Transverse colon (tissue), 4 donors: ENCODE measurements at regions of chr2 and their contacts with region 1.

Region 1: GRCh38 chr2:174682578-174683391 is 81.5 kb downstream of the CHRNA1 start:
- DNase-seq: peak; percentile 75
- H3K4me3 ChIP-seq: peak overlapping the region; percentile 72 to 89 (median 81)
- H3K27ac ChIP-seq: peak overlapping the region; percentile 84 to 88 (median 86)
- H3K4me1 ChIP-seq: peaks cover 3 to 17% (median 13%) of the 10 kb centered on the region in 4 donors
- H3K27me3 ChIP-seq: peaks cover 12% of the 10 kb centered on the region
- CTCF ChIP-seq: no peak
- EP300 ChIP-seq: no peak
- POLR2A ChIP-seq: no peak

Region 2: DNA sequence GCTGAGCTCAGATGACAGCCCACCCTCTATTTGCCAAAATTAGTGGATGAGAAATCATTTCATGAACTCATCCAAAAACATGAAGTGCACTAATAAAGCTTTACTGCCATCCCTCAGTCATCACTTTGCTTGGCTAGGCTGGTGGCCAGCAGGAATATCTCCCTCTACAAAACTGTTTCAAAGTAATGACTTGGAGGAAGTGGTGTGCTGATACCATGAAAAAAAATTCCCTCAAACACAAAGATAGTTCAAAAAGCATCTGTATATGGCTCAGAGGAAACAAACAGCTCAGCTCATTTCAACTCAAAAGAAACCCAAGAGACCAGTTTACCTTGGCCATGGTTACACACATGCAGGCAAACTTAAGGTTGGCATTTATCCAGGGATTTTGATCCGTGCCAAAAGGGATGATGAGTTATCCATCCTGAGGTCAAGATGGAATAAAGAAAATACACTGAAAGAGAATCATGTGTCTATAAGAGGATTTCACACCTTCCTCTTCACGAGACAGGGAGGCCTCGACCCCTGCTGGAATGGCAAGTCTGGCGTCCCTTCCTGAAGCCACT is 66.8 kb before region 1 on chr2:
- in situ Hi-C with region 1: no loop called
- intact Hi-C with region 1: loop called (anchors 10 kb)
- DNase-seq: no peak
- H3K4me3 ChIP-seq: no peak overlapping the region
- H3K27ac ChIP-seq: peak overlapping the region in 3 of 4 donors; percentile 1 to 25 (median 6)
- H3K4me1 ChIP-seq: peaks cover 0 to 46% (median 25%) of the 10 kb centered on the region in 4 donors
- H3K27me3 ChIP-seq: no peaks in the 10 kb centered on the region
- CTCF ChIP-seq: no peak
- EP300 ChIP-seq: no peak
- POLR2A ChIP-seq: no peak

Region 3: DNA sequence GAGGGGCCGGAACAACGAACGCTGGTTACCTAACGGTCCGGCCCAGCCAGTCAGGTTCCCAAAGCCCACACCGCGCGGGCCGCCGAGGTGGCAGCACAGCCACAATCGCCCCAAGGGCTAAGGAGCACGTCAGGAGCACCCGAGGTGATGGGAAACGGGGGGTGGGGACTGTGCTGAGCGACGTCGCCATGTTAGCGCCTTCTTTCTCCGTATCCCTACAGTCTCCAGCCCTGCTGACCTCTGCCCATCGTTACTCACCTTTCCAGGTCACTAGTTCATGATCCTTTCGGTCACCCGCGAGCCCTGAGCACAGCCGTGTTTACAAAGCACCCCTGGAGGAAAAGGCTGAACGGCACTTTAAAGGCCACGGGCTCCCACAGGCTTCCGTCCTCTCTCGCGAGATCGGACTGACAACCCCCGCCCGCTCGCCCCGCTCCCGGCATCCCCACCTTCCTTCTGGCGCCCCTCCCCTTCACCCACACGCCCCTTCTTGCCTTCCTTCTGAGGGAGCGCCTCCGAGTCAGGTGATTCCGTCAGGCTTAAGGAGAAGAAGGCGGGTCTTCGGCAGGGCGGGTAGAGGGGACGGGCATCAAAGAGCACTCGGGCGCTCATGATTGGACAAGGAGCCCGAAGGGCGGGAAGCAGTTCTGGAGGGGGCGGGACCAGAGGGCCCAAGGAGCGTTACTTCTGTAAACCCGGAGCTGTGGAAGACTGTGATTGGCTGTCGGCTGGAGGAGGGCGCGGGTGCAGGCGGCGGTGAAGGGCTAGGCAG is 485.2 kb after region 1 on chr2 and contains the start of gene ATF2:
- in situ Hi-C with region 1: no loop called
- intact Hi-C with region 1: loop called (anchors 2 kb)
- DNase-seq: peak; percentile 98
- H3K4me3 ChIP-seq: peak within 1 kb of the TSS; percentile 62 to 84 (median 68)
- H3K27ac ChIP-seq: peak within 1 kb of the TSS; percentile 90 to 93 (median 92)
- H3K4me1 ChIP-seq: peaks cover 5 to 26% (median 8%) of the 10 kb centered on the region in 4 donors
- H3K27me3 ChIP-seq: no peaks in the 10 kb centered on the region
- CTCF ChIP-seq: peak in 2 of 5 experiments; percentile 21 to 27
- EP300 ChIP-seq: no peak
- POLR2A ChIP-seq: peak; percentile 76
- total RNA-seq, gene ATF2: 20.2 to 52.9 (median 30.0) TPM